Heart right ventricle (tissue), 16 donors: ENCODE measurements at regions of chr9 and their contacts with region 1.

Region 1: DNA sequence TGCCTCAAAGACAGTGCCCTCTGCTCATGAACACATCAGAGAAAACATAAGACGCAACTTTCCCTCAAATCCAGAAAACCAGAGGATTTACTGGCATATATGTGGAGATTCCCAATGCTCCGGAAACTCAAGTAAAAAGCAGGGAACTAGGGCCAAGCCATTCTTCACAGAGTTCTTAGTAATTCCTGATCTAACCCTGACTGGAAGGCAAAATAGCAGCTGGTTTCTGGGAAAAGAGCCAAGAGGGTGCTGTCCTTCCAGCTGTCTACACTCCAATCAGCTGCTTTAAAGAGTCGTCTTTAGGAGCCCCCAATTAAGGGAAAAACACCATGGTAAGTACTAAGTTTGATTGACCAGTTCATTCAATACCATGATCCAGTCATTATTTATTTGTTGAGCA is 49.6 kb downstream of the GNA14 start:
- DNase-seq: peak in 1 of 2 donors; percentile 65
- ATAC-seq: peak; percentile 67 to 89 (median 76)
- H3K4me3 ChIP-seq: no peak overlapping the region
- H3K27ac ChIP-seq: peak overlapping the region in 8 of 10 donors; percentile 21 to 71 (median 58)
- H3K4me1 ChIP-seq: peaks cover 3 to 61% (median 45%) of the 10 kb centered on the region in 9 donors
- H3K27me3 ChIP-seq: no peaks in the 10 kb centered on the region
- CTCF ChIP-seq: no peak

Region 2: GRCh38 chr9:77514886-77515711 is 83.4 kb before region 1 on chr9:
- intact Hi-C with region 1: loop called in 5 of 10 experiments (anchors 5 to 10 kb)
- DNase-seq: peak in 1 of 2 donors; percentile 62
- ATAC-seq: peak; percentile 87 to 95 (median 92)
- H3K4me3 ChIP-seq: no peak overlapping the region
- H3K27ac ChIP-seq: peak overlapping the region; percentile 56 to 80 (median 66)
- H3K4me1 ChIP-seq: peaks cover 0 to 55% (median 21%) of the 10 kb centered on the region in 9 donors
- H3K27me3 ChIP-seq: no peaks in the 10 kb centered on the region
- CTCF ChIP-seq: no peak

Region 3: GRCh38 chr9:77521091-77521490 is 77.4 kb before region 1 on chr9:
- intact Hi-C with region 1: loop called in 4 of 10 experiments (anchors 10 kb)
- DNase-seq: peak; percentile 29 to 65
- ATAC-seq: peak in 5 of 8 donors; percentile 42 to 76 (median 62)
- H3K4me3 ChIP-seq: no peak overlapping the region
- H3K27ac ChIP-seq: peak overlapping the region in 4 of 10 donors; percentile 21 to 56 (median 48)
- H3K4me1 ChIP-seq: peaks cover 0 to 23% (median 2%) of the 10 kb centered on the region in 9 donors
- H3K27me3 ChIP-seq: no peaks in the 10 kb centered on the region
- CTCF ChIP-seq: no peak